ENCODE measurements at regions of chr6 and their contacts with region 1.

Region 1: GRCh38 chr6:125201961-125202591 is 48.5 kb downstream of the TPD52L1 start:
- DNase-seq: peak; percentile 94
- ATAC-seq: peak; percentile 77
- H3K4me3 ChIP-seq: no peak overlapping the region
- H3K27ac ChIP-seq: peak overlapping the region; percentile 99
- H3K4me1 ChIP-seq: peaks cover 13% of the 10 kb centered on the region
- H3K27me3 ChIP-seq: no peaks in the 10 kb centered on the region
- CTCF ChIP-seq: no peak
- POLR2A ChIP-seq: no peak
- RAD21 ChIP-seq: no peak

Region 2: GRCh38 chr6:124870611-124871459 is 331.2 kb before region 1 on chr6:
- CTCF ChIA-PET with region 1: no interaction called
- POLR2A ChIA-PET with region 1: no interaction called
- dilution Hi-C with region 1: no loop called
- in situ Hi-C with region 1: no loop called
- intact Hi-C with region 1: loop called (anchors 5 kb)
- DNase-seq: peak; percentile 64
- ATAC-seq: peak; percentile 67
- H3K4me3 ChIP-seq: no peak overlapping the region
- H3K27ac ChIP-seq: no peak overlapping the region
- H3K4me1 ChIP-seq: peaks cover 2% of the 10 kb centered on the region; the same call in 1 of the 2 replicates
- H3K27me3 ChIP-seq: no peaks in the 10 kb centered on the region
- CTCF ChIP-seq: peak; percentile 83
- POLR2A ChIP-seq: no peak
- RAD21 ChIP-seq: peak; percentile 86

Region 3: GRCh38 chr6:125220712-125221111 is 18.6 kb after region 1 on chr6:
- CTCF ChIA-PET with region 1: interaction called, 3 read pairs
- POLR2A ChIA-PET with region 1: interaction called, 8 read pairs
- dilution Hi-C with region 1: no loop called
- in situ Hi-C with region 1: no loop called
- intact Hi-C with region 1: loop called (anchors 2 kb)
- DNase-seq: peak; percentile 44
- ATAC-seq: peak; percentile 58
- H3K4me3 ChIP-seq: no peak overlapping the region
- H3K27ac ChIP-seq: no peak overlapping the region
- H3K4me1 ChIP-seq: peaks cover 8% of the 10 kb centered on the region
- H3K27me3 ChIP-seq: no peaks in the 10 kb centered on the region
- CTCF ChIP-seq: no peak
- POLR2A ChIP-seq: no peak
- RAD21 ChIP-seq: no peak

Region 4: GRCh38 chr6:125251516-125252220 is 49.6 kb after region 1 on chr6:
- CTCF ChIA-PET with region 1: no interaction called
- POLR2A ChIA-PET with region 1: no interaction called
- dilution Hi-C with region 1: no loop called
- in situ Hi-C with region 1: no loop called
- intact Hi-C with region 1: loop called (anchors 5 kb)
- DNase-seq: no peak
- ATAC-seq: peak; percentile 67
- H3K4me3 ChIP-seq: no peak overlapping the region
- H3K27ac ChIP-seq: peak overlapping the region; percentile 39; the same call in 1 of the 2 replicates
- H3K4me1 ChIP-seq: peaks cover 10% of the 10 kb centered on the region
- H3K27me3 ChIP-seq: no peaks in the 10 kb centered on the region
- CTCF ChIP-seq: no peak
- POLR2A ChIP-seq: no peak
- RAD21 ChIP-seq: no peak

Region 5: DNA sequence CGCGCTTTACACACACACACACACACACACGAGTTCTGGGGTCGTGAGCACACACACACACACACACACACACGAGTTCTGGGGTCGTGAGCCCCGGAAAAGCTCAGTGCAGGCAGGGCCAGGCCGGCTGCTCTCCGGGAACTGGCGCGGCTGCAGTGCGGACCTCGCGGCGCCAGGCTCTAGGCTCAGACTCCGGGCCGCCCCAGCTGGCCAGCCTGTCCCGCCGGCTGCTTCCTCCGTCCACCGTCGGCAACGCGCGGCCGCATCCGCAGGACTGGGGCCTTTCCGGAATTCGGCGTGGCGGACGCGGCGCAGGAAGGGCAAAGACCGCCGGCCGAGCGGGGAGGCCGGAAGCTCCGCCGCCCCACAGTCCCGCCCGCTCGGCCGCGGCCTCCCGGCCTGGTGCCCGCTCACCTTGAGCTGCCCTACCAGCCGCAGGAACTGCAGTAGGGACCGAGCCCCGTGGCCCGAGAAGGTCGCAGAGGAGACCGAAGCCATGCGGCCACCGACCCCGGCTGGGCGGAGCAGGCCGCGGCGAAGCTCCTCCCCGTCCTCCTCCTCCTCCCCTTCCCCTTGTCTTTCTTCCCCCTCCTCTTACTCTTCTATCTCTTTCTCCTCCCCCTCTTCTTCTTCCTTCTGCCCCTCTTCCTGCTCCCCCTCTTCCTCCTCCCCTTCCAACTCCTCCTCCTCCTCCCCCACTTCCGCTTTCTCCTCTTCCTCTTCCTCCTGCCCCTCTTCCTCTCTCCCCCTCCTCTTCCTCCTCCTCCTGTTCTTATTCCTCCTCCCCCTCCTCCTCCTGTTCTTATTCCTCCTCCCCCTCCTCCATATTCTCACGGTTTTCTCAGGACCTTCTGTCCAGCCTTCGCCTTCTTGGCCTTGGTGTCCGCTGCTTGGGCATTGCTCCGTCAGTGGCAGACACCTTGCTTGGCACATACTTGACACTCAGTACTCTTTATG is 99.6 kb after region 1 on chr6 and contains the start of gene HDDC2:
- CTCF ChIA-PET with region 1: no interaction called
- POLR2A ChIA-PET with region 1: interaction called, 4 read pairs
- dilution Hi-C with region 1: no loop called
- in situ Hi-C with region 1: no loop called
- intact Hi-C with region 1: loop called (anchors 5 kb)
- DNase-seq: peak; percentile 73
- ATAC-seq: peak; percentile 84
- H3K4me3 ChIP-seq: peak within 1 kb of the TSS; percentile 84
- H3K27ac ChIP-seq: peak within 1 kb of the TSS; percentile 98
- H3K4me1 ChIP-seq: peaks cover 4% of the 10 kb centered on the region
- H3K27me3 ChIP-seq: no peaks in the 10 kb centered on the region
- CTCF ChIP-seq: no peak
- POLR2A ChIP-seq: peak; percentile 55; the same call in 1 of the 2 replicates
- RAD21 ChIP-seq: no peak
- total RNA-seq, gene HDDC2: 40.9 and 51.4 TPM in 2 replicates

Region 6: GRCh38 chr6:125498606-125499005 is 296.5 kb after region 1 on chr6:
- CTCF ChIA-PET with region 1: no interaction called
- POLR2A ChIA-PET with region 1: no interaction called
- dilution Hi-C with region 1: no loop called
- in situ Hi-C with region 1: no loop called
- intact Hi-C with region 1: no loop called
- DNase-seq: no peak
- ATAC-seq: no peak
- H3K4me3 ChIP-seq: no peak overlapping the region
- H3K27ac ChIP-seq: no peak overlapping the region
- H3K4me1 ChIP-seq: no peaks in the 10 kb centered on the region
- H3K27me3 ChIP-seq: no peaks in the 10 kb centered on the region
- CTCF ChIP-seq: no peak
- POLR2A ChIP-seq: no peak
- RAD21 ChIP-seq: no peak